Dorsolateral prefrontal cortex (tissue), 120 donors: ENCODE measurements at regions of chr1 and their contacts with region 1.

Region 1: GRCh38 chr1:234862944-234863515 is 253.1 kb upstream of the IRF2BP2 start:
- DNase-seq: peak; percentile 52 to 81 (median 71)
- H3K4me3 ChIP-seq: peak overlapping the region in 49 of 59 donors; percentile 0 to 60 (median 29)
- H3K27ac ChIP-seq: peak overlapping the region; percentile 28 to 91 (median 83)
- H3K27me3 ChIP-seq: no peaks in the 10 kb centered on the region
- CTCF ChIP-seq: peak in 2 of 56 donors; percentile 12 to 18

Region 2: DNA sequence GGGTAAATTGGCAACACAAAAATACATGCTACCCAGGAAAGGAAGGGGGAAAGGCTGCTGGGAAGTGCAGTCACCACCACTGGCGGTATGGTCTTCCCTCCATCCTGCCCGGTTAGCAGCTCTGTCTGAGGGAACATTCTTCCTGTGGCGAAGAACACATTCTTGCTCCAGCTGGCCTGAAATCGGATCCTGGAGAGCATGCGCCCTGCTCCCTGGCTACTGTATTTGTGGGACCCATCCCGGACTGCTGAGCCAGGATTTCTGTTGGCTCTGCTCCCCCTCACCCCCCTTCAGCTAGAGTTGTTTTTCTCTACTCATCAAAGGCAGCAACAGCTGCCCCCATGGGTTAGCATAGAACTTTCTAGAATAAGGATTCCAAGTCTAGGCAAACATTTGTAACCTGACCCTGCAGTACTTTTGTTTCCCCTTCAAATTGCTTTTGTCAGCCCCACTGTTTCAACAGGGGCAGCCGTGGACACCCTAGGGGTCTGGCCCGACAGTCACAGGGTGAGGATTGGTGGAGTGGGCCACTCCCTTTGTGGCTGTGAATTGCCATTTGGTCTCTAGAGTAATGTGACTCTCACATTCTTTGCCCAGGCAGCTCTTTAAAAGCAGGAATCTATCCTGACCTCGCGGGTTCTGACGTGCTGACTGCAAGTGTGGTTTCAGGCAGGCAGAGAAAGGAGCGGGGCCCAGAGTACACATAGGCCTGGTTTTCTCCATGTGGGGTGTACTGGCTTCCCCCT is 107.9 kb after region 1 on chr1:
- intact Hi-C with region 1: loop called in 1 of 2 experiments (anchors 5 kb)
- DNase-seq: peak in 7 of 10 donors; percentile 40 to 69 (median 63)
- H3K4me3 ChIP-seq: peak overlapping the region in 34 of 59 donors; percentile 29 to 66 (median 54)
- H3K27ac ChIP-seq: peak overlapping the region; percentile 19 to 93 (median 85)
- H3K27me3 ChIP-seq: no peaks in the 10 kb centered on the region
- CTCF ChIP-seq: no peak